Dorsolateral prefrontal cortex (tissue), 120 donors: ENCODE measurements at regions of chrX and their contacts with region 1.

Region 1: GRCh38 chrX:48021026-48021900 is 14.5 kb downstream of the SPACA5 start:
- DNase-seq: peak in 9 of 10 donors; percentile 54 to 73 (median 62)
- H3K4me3 ChIP-seq: peak overlapping the region; percentile 26 to 74 (median 60)
- H3K27ac ChIP-seq: peak overlapping the region; percentile 52 to 99 (median 93)
- H3K27me3 ChIP-seq: peaks cover 0 to 6% (median 0%) of the 10 kb centered on the region in 45 donors
- CTCF ChIP-seq: no peak

Region 2: DNA sequence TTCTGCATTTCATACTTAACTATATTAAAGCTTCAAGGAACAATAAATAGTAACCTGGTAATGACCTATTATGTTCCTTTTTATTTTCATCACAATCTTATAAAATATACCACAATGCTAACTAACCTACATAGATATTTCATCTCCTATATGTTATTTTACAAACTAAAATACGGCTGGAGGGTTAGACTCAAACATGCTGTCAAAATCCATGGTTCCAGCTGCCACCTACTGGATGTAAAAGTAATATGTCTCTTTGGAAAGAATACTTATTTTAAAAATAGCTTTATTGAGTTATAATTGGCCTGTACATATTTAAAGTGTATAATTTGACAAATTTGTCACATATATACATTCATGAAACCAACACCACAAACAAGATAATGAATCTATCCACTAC is 928.0 kb before region 1 on chrX:
- intact Hi-C with region 1: no loop called
- DNase-seq: no peak
- H3K4me3 ChIP-seq: no peak overlapping the region
- H3K27ac ChIP-seq: peak overlapping the region in 5 of 59 donors; percentile 27 to 81 (median 79)
- H3K27me3 ChIP-seq: peaks cover 0 to 41% (median 4%) of the 10 kb centered on the region in 45 donors
- CTCF ChIP-seq: peak in 55 of 56 donors; percentile 35 to 76 (median 57)

Region 3: DNA sequence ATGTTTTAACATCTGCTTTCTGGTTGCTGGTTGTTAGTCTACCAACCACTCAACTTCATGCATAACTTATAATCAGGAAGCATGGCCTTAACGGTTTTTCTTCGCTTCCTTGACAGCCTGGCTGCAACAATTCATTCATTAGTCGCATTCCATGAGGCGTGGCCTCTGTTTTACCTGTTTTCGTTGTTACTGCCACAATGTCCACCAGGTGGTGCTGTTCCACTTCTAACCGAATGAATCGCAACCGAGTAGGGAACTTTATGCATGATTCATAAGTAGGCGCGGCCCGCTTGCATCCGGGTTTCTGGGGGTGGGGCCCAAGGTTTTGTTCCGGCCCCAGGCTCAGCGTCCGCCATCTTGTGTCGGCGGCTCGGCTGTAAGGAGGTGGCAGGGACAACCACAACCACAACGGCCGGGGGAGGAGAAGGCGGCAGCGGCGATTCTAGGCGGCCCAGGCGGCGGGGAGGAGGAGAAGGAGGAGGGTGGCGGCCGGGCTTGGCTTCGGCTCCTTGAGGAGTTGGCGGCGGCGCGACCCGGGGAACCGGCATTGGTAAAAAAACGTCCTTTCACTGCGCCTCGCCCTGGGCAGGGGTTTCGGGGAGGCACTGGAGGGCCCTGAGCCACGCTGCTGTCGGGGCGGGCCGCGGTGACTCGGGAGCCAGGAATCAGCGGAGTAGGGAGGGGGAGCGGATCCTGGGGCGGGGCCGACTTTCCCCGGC is 827.6 kb before region 1 on chrX and contains the start of gene UBA1:
- intact Hi-C with region 1: loop called in 1 of 2 experiments (anchors 10 kb)
- DNase-seq: peak; percentile 95 to 99 (median 98)
- H3K4me3 ChIP-seq: peak within 1 kb of the TSS; percentile 38 to 99 (median 89)
- H3K27ac ChIP-seq: peak within 1 kb of the TSS; percentile 66 to 99 (median 95)
- H3K27me3 ChIP-seq: peaks cover 0 to 25% (median 3%) of the 10 kb centered on the region in 45 donors
- CTCF ChIP-seq: peak in 55 of 56 donors; percentile 44 to 100 (median 96)
- total RNA-seq, gene UBA1: 186 to 279 (median 239) TPM

Region 4: DNA sequence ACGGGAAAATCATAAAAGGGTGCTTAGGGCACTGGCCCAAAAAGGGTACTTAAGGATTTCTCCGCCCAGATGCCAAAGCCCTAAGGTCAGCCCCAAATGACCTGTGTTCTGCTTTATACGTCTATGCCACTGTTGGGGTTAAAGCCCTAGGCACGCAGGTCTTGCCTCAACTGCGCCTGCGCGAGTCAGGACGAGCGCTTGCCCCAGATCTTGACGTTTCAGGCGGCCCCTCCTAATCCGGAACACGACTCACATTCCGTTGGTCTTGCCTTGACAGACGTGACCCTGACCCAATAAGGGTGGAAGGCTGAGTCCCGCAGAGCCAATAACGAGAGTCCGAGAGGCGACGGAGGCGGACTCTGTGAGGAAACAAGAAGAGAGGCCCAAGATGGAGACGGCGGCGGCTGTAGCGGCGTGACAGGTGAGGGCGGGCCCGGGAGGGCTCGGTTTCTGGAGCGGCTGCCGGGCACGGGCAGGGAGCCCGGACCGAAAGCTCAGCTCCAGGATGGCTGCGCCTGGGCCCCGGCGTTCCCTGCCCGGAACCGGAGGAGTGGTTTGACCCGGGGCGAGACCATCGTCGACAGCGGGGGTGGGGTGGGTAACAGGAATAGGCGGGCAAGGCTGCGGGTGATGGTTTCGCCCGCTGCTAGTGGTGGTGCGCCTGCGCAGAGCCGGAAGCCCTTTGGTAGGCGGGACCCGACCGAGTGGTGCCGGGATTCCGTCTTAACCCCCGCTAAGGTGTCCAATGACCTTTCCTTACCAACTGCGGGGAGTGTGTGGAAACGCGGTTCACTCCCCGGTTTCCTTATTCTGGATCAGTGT is 460.2 kb before region 1 on chrX and contains the start of gene ARAF:
- intact Hi-C with region 1: loop called in 1 of 2 experiments (anchors 10 kb)
- DNase-seq: peak; percentile 84 to 98 (median 96)
- H3K4me3 ChIP-seq: peak within 1 kb of the TSS; percentile 41 to 81 (median 67)
- H3K27ac ChIP-seq: peak within 1 kb of the TSS; percentile 89 to 99 (median 97)
- H3K27me3 ChIP-seq: peaks cover 0 to 28% (median 2%) of the 10 kb centered on the region in 45 donors
- CTCF ChIP-seq: peak in 1 of 56 donors; percentile 9
- total RNA-seq, gene ARAF: 19.3 to 46.5 (median 30.2) TPM

Region 5: DNA sequence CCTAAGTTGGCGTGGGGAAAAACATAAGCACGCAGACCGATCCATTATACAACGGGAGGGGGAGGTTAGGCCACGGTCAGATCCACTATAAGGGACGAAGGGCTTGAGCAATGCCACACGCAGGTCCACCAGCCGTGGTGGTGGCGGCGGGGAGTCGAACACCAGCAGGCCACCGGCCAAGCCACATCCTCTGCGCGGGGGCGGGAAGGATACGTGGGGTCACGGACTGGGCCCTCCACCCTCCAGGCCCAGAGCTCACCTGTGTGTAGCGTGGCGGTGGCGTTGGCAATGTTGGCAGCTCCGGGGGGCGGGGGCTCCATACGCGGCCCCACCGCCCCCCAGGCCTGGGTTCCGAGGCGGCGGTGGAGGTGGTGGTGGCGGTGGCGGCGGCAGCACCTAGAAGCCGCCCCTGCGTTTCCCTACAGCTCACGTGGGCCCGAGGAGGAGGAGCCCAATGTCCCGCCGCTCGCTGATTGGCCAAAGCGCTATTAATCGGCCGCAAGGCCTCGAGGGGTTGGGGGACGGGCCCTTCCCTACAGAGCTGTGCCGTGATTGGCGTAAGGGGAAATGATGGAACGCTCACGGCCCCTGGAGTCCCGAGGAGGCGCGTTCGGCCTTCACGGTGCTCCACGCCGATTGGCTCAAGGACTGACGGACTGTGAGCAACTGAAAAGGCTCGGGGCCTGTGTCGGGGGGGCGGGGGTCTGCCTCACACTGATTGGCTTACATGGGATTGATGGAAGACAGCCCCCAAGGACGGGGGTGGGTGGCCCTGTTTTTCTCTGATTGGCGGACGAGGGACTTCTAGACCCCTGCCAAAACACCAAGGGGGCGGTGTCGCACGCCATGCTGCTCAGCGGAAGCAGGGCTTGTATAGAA is 370.9 kb before region 1 on chrX and contains the start of gene ELK1:
- intact Hi-C with region 1: loop called in 1 of 2 experiments (anchors 10 kb)
- DNase-seq: peak; percentile 89 to 98 (median 97)
- H3K4me3 ChIP-seq: peak within 1 kb of the TSS; percentile 33 to 79 (median 65)
- H3K27ac ChIP-seq: peak within 1 kb of the TSS in 54 of 59 donors; percentile 31 to 89 (median 76)
- H3K27me3 ChIP-seq: peaks cover 0 to 55% (median 4%) of the 10 kb centered on the region in 45 donors
- CTCF ChIP-seq: peak in 9 of 56 donors; percentile 4 to 34 (median 17)
- total RNA-seq, gene ELK1: 25.1 to 179 (median 92.3) TPM

Region 6: DNA sequence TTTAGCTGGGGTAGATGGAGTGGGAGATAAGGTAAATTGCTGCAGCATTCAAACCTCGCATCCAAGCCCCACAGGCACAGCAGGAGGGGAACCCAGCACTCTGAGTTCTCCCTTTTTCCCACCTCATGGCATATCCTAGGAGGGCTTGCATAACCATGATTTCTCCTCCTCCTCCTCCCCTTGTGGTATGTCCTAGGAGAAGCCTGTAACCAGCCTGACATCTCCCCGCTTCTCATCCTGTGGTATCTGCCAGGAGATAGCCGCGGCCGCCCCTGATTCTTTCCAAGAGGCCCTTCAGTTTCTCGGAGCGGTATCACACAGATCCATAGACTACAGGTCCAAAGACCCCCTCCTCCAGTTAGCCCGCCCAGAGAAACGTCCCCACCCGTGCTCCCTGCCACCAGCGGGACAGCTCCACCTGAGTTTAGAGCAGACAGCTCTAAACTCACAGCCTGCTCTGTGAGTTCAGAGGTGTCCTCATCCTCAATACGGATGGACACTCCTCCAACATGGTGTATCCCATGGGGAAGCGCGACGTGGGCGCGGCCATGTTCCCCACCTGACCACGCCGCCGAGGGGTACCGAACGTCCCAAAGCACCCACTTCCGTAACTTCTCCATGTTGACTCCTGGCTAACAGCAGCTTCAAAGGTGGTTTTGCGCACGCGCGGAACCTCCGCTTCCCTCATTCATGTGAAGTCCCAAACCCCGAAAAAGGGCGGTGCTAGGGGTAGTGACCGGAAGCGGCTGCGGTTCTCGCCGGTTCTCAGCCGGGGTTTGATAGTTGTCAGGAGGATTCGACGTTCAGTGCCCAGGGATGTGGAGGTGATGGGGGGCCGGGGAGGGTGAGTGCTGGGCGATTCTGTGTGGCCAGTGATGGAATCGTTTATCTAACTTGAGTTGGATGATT is 184.8 kb before region 1 on chrX and contains the start of gene ZNF81:
- intact Hi-C with region 1: loop called in 1 of 2 experiments (anchors 2 kb)
- DNase-seq: peak; percentile 86 to 94 (median 92)
- H3K4me3 ChIP-seq: peak within 1 kb of the TSS; percentile 26 to 76 (median 60)
- H3K27ac ChIP-seq: peak within 1 kb of the TSS in 55 of 59 donors; percentile 5 to 85 (median 70)
- H3K27me3 ChIP-seq: peaks cover 0 to 44% (median 0%) of the 10 kb centered on the region in 45 donors
- CTCF ChIP-seq: peak in 8 of 56 donors; percentile 3 to 31 (median 15)
- total RNA-seq, gene ZNF81: 13.5 to 35.3 (median 21.3) TPM

Region 7: GRCh38 chrX:47898024-47898423 is 123.2 kb before region 1 on chrX:
- intact Hi-C with region 1: no loop called
- DNase-seq: no peak
- H3K4me3 ChIP-seq: no peak overlapping the region
- H3K27ac ChIP-seq: no peak overlapping the region
- H3K27me3 ChIP-seq: peaks cover 0 to 36% (median 4%) of the 10 kb centered on the region in 45 donors
- CTCF ChIP-seq: no peak